Transverse colon (tissue), 4 donors: ENCODE measurements at regions of chr2 and their contacts with region 1.

Region 1: GRCh38 chr2:44167940-44168680 is 565 bp upstream of the PPM1B start:
- DNase-seq: peak; percentile 98
- H3K4me3 ChIP-seq: peak overlapping the region; percentile 24 to 65 (median 50)
- H3K27ac ChIP-seq: peak overlapping the region; percentile 95 to 99 (median 97)
- H3K4me1 ChIP-seq: peaks cover 0 to 34% (median 25%) of the 10 kb centered on the region in 4 donors
- H3K27me3 ChIP-seq: no peaks in the 10 kb centered on the region
- CTCF ChIP-seq: no peak
- EP300 ChIP-seq: no peak
- POLR2A ChIP-seq: no peak

Region 2: GRCh38 chr2:42859006-42859552 is 1309.0 kb before region 1 on chr2:
- in situ Hi-C with region 1: no loop called
- intact Hi-C with region 1: loop called (anchors 10 kb)
- DNase-seq: peak; percentile 84
- H3K4me3 ChIP-seq: no peak overlapping the region
- H3K27ac ChIP-seq: peak overlapping the region in 2 of 4 donors; percentile 1 to 47
- H3K4me1 ChIP-seq: peaks cover 0 to 8% (median 5%) of the 10 kb centered on the region in 4 donors
- H3K27me3 ChIP-seq: no peaks in the 10 kb centered on the region
- CTCF ChIP-seq: peak; percentile 83 to 97 (median 93)
- EP300 ChIP-seq: no peak
- POLR2A ChIP-seq: no peak

Region 3: GRCh38 chr2:44055229-44055628 is 112.9 kb before region 1 on chr2:
- in situ Hi-C with region 1: no loop called
- intact Hi-C with region 1: no loop called
- DNase-seq: no peak
- H3K4me3 ChIP-seq: no peak overlapping the region
- H3K27ac ChIP-seq: no peak overlapping the region
- H3K4me1 ChIP-seq: no peaks in the 10 kb centered on the region
- H3K27me3 ChIP-seq: no peaks in the 10 kb centered on the region
- CTCF ChIP-seq: no peak
- EP300 ChIP-seq: no peak
- POLR2A ChIP-seq: no peak

Region 4: GRCh38 chr2:44184106-44184505 is 16.0 kb after region 1 on chr2:
- in situ Hi-C with region 1: no loop called
- intact Hi-C with region 1: no loop called
- DNase-seq: no peak
- H3K4me3 ChIP-seq: no peak overlapping the region
- H3K27ac ChIP-seq: no peak overlapping the region
- H3K4me1 ChIP-seq: peaks cover 0 to 47% (median 9%) of the 10 kb centered on the region in 4 donors
- H3K27me3 ChIP-seq: no peaks in the 10 kb centered on the region
- CTCF ChIP-seq: no peak
- EP300 ChIP-seq: no peak
- POLR2A ChIP-seq: no peak